GM12878 (cell line): ENCODE measurements at regions of chr22 and their contacts with region 1.

Region 1: GRCh38 chr22:22959147-22959827 is 71.7 kb downstream of the IGLL5 start:
- DNase-seq: peak; percentile 56
- ATAC-seq: peak; percentile 66
- H3K4me3 ChIP-seq: no peak overlapping the region
- H3K27ac ChIP-seq: no peak overlapping the region
- H3K4me1 ChIP-seq: peaks cover 11% of the 10 kb centered on the region
- H3K27me3 ChIP-seq: no peaks in the 10 kb centered on the region
- CTCF ChIP-seq: peak; percentile 81 to 100 (median 95); a peak in 5 of 6 replicates
- EP300 ChIP-seq: no peak
- POLR2A ChIP-seq: no peak
- RAD21 ChIP-seq: peak; percentile 100

Region 2: GRCh38 chr22:21938071-21938822 is 1021.0 kb before region 1 on chr22:
- CTCF ChIA-PET with region 1: interaction called, 4 read pairs
- POLR2A ChIA-PET with region 1: no interaction called
- RAD21 ChIA-PET with region 1: interaction called, 5 read pairs
- SMC1A ChIA-PET with region 1: interaction called, 3 read pairs
- in situ Hi-C with region 1: no loop called
- intact Hi-C with region 1: loop called (anchors 5 kb)
- DNase-seq: peak; percentile 62
- ATAC-seq: peak; percentile 99
- H3K4me3 ChIP-seq: peak overlapping the region; percentile 76
- H3K27ac ChIP-seq: peak overlapping the region; percentile 59
- H3K4me1 ChIP-seq: peaks cover 16% of the 10 kb centered on the region
- H3K27me3 ChIP-seq: no peaks in the 10 kb centered on the region
- CTCF ChIP-seq: peak; percentile 98 to 100 (median 99)
- EP300 ChIP-seq: 0 out of 4 replicates have a peak, but pooled peaks of 1 of the 2 experiments have one; percentile 16
- POLR2A ChIP-seq: peak; percentile 85
- RAD21 ChIP-seq: peak; percentile 85

Region 3: DNA sequence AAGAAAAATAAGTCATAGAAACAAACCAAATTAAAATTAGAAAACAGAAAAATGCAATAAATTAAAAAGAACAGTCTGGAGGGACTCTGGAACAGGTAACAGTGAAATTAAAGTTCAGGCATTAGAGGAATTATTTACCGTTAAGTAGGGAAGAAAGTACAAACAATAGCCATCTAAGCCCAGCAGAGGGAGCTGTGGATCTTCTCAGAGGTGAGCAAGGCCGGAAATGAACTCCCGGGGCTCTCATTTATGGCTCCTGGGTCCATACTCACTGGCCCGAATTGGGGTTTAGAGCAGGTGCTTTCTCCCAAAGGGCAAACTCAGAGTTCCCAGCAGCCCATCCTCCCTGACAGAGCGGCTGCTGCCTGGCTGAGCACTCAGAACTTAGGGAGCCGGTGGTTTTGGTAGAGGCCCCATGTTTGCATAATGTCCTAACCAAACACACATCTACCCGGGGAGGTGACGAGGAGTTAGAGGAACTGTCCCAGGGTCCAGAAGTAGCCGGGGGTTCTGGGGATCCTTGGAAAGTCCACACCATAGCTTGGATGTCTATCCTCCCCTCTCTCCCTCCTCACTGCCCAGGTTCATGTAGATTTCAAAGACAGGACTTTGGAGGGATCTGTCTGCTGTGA is 802.5 kb before region 1 on chr22:
- CTCF ChIA-PET with region 1: interaction called, 75 read pairs
- POLR2A ChIA-PET with region 1: no interaction called
- RAD21 ChIA-PET with region 1: interaction called, 39 read pairs
- SMC1A ChIA-PET with region 1: interaction called, 38 read pairs
- in situ Hi-C with region 1: loop called (anchors 10 kb)
- intact Hi-C with region 1: loop called (anchors 1 kb)
- DNase-seq: peak; percentile 59
- ATAC-seq: peak; percentile 94
- H3K4me3 ChIP-seq: no peak overlapping the region
- H3K27ac ChIP-seq: peak overlapping the region; percentile 86
- H3K4me1 ChIP-seq: peaks cover 10% of the 10 kb centered on the region
- H3K27me3 ChIP-seq: no peaks in the 10 kb centered on the region
- CTCF ChIP-seq: peak; percentile 67 to 79 (median 75)
- EP300 ChIP-seq: 0 out of 4 replicates have a peak, but pooled peaks of 1 of the 2 experiments have one; percentile 23
- POLR2A ChIP-seq: peak; percentile 41
- RAD21 ChIP-seq: peak; percentile 80

Region 4: DNA sequence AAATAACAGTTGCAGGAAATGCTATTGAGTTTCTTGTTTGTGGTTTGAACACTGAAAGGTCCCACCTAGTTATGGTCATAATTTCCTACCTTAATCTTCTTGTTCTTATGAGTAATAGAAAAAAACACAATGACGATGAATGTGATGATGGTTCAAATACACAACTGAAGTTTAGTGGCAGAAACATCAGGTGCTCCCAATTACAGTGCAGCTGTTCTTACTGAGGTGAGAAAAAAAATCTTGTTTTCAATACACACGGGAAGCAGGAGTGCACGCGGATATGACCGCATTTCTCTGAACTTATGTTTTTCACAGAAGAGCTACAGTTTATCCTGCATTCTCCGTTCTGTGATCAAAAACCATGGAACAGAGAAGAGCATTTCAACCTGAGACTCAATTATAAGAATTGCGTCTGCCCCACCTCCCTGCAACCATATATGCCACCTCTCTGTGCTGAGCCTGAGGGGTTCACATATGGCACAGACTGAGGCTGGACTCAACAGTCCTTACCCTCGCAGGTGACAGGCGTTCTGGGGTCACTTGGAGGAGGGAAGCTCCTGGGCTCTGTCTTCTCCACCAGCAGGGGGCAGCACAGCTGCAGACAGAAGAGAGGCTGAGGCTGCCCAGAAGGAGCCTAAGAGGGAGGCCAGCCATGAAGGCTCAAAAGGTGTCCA is 171.4 kb before region 1 on chr22:
- CTCF ChIA-PET with region 1: interaction called, 115 read pairs
- POLR2A ChIA-PET with region 1: no interaction called
- RAD21 ChIA-PET with region 1: interaction called, 59 read pairs
- SMC1A ChIA-PET with region 1: interaction called, 48 read pairs
- in situ Hi-C with region 1: no loop called
- intact Hi-C with region 1: loop called (anchors 5 kb)
- DNase-seq: no peak
- ATAC-seq: peak; percentile 92
- H3K4me3 ChIP-seq: no peak overlapping the region
- H3K27ac ChIP-seq: no peak overlapping the region
- H3K4me1 ChIP-seq: no peaks in the 10 kb centered on the region
- H3K27me3 ChIP-seq: no peaks in the 10 kb centered on the region
- CTCF ChIP-seq: peak; percentile 49 to 79 (median 59)
- EP300 ChIP-seq: no peak
- POLR2A ChIP-seq: no peak
- RAD21 ChIP-seq: no peak

Region 5: DNA sequence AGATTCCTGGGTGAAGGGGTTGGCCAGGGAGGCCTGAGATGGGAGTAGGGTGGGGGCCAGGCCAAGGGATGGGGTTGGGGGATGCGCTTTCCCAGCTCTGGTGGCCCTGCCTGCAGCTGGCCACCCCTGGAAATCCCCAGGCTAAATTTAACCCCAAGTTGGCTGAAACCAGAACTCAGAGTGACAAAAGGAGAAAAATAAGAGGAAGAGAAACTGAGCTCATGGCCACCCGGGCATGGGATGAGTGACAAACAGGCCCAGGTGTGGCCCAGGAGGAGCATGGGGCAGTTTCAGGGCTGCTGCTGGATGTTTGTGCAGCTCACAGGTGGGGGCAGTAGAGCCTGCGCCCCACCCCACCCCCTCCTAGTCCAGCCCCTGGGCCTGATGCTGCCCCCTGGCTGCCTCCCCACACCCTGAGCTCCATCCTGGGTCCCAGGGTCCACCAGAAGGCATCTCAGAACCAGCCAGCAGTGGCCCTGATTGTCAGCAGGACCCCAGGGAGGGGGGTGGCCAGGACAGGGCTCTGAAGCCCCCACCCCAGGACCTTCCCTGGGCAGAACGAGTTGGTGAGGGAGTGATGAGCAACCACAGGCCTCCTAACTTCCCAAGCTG is 23.6 kb before region 1 on chr22:
- CTCF ChIA-PET with region 1: interaction called, 397 read pairs
- POLR2A ChIA-PET with region 1: interaction called, 21 read pairs
- RAD21 ChIA-PET with region 1: interaction called, 145 read pairs
- SMC1A ChIA-PET with region 1: interaction called, 93 read pairs
- in situ Hi-C with region 1: no loop called
- intact Hi-C with region 1: no loop called
- DNase-seq: peak; percentile 99
- ATAC-seq: peak; percentile 84
- H3K4me3 ChIP-seq: peak overlapping the region; percentile 24; the same call in 1 of the 2 replicates
- H3K27ac ChIP-seq: peak overlapping the region; percentile 99
- H3K4me1 ChIP-seq: peaks cover 92% of the 10 kb centered on the region
- H3K27me3 ChIP-seq: no peaks in the 10 kb centered on the region
- CTCF ChIP-seq: peak; percentile 53 to 83 (median 71)
- EP300 ChIP-seq: peak; percentile 100
- POLR2A ChIP-seq: no peak; the same call in 1 of the 2 replicates
- RAD21 ChIP-seq: peak; percentile 75

Region 6: DNA sequence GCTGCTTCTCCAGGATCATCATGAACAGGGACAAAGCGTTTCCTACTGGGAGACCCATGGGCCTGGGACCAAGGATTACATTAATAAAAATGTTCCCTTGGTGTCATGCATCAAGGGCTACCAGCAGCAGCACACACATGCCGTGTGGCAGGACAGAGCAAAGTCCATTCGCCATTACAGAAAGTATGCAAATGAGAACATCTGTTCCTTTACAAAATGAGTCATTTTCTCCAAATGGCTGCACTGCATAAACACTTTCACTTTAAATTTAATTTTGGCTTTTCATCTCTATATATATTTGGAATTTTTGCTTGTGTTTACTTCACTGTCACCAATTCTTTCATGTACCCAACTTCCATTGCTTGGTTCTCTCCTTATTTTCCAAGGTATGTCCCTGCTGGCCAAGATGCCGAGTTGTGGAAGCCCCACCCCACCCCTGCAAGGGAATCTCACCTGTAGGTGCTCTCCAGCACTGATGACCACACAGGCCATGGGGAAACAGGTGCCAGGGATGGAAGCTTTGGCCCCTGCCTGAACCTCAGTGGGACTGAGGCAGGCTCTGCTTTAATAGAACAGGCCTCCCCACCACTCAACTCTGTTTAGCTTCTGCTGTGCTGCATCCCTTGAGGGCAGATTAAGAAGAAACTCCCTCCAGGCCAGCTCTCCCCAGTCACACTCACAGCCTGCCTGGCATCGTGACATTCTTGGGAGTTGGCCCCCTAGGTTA is 95.4 kb after region 1 on chr22:
- CTCF ChIA-PET with region 1: interaction called, 18 read pairs
- POLR2A ChIA-PET with region 1: no interaction called
- RAD21 ChIA-PET with region 1: interaction called, 7 read pairs
- SMC1A ChIA-PET with region 1: interaction called, 10 read pairs
- in situ Hi-C with region 1: no loop called
- intact Hi-C with region 1: no loop called
- DNase-seq: peak; percentile 55
- ATAC-seq: peak; percentile 97
- H3K4me3 ChIP-seq: peak overlapping the region; percentile 32; the same call in 1 of the 2 replicates
- H3K27ac ChIP-seq: peak overlapping the region; percentile 45; the same call in 1 of the 2 replicates
- H3K4me1 ChIP-seq: peaks cover 13% of the 10 kb centered on the region
- H3K27me3 ChIP-seq: no peaks in the 10 kb centered on the region
- CTCF ChIP-seq: no peak
- EP300 ChIP-seq: peak; percentile 27 to 53; a peak in 2 of 4 replicates
- POLR2A ChIP-seq: no peak
- RAD21 ChIP-seq: no peak

Region 7: GRCh38 chr22:23137905-23138561 is 178.7 kb after region 1 on chr22:
- CTCF ChIA-PET with region 1: interaction called, 539 read pairs
- POLR2A ChIA-PET with region 1: interaction called, 7 read pairs
- RAD21 ChIA-PET with region 1: interaction called, 84 read pairs
- SMC1A ChIA-PET with region 1: interaction called, 277 read pairs
- in situ Hi-C with region 1: no loop called
- intact Hi-C with region 1: no loop called
- DNase-seq: peak; percentile 86
- ATAC-seq: peak; percentile 72
- H3K4me3 ChIP-seq: 0 out of 2 replicates have a peak overlapping the region, but pooled peaks have one; percentile 7
- H3K27ac ChIP-seq: peak overlapping the region; percentile 86
- H3K4me1 ChIP-seq: peaks cover 60% of the 10 kb centered on the region
- H3K27me3 ChIP-seq: no peaks in the 10 kb centered on the region
- CTCF ChIP-seq: no peak
- EP300 ChIP-seq: peak in 1 of 2 experiments; percentile 65; a peak in 1 of 4 replicates
- POLR2A ChIP-seq: no peak
- RAD21 ChIP-seq: no peak